Posterior cingulate gyrus (tissue), 11 donors: ENCODE measurements at regions of chr17 and their contacts with region 1.

Region 1: GRCh38 chr17:13002766-13003451 is 14.9 kb downstream of the ELAC2 start:
- DNase-seq: peak; percentile 65 to 97 (median 88)

Region 2: GRCh38 chr17:12180644-12181261 is 822.2 kb before region 1 on chr17:
- intact Hi-C with region 1: loop called (anchors 2 kb)
- DNase-seq: peak in 3 of 10 donors; percentile 9 to 27 (median 15)

Region 3: DNA sequence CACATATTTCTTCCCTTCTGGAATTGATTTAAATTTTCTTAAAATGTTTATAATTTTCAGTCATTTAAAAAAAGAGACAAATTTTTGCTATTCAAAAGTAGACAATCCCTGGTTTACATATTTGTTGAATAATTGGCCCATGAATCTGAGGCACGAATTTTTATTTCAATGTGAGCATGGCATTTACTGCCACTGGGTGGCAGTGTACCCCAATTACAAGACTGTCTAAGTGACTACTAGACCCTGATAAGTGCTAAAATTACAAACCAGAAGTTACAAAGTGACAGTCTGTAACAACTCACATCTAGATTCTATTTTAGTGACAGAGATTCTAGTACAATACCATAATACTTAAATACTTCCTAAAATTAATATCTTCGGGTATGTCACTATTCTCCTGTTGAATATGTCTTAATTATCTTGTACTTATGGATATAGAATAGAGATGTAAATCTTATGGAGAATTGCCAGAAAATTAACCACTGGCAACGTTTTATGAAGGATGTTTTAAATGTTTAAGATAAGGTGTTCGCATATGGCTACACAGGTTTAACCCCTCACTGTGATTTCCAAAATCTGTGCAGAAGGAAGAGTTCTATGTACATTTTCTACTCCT is 746.4 kb before region 1 on chr17:
- intact Hi-C with region 1: loop called (anchors 2 kb)
- DNase-seq: peak in 4 of 10 donors; percentile 15 to 54 (median 35)

Region 4: GRCh38 chr17:12928741-12929140 is 74.2 kb before region 1 on chr17:
- intact Hi-C with region 1: loop called (anchors 5 kb)
- DNase-seq: no peak

Region 5: DNA sequence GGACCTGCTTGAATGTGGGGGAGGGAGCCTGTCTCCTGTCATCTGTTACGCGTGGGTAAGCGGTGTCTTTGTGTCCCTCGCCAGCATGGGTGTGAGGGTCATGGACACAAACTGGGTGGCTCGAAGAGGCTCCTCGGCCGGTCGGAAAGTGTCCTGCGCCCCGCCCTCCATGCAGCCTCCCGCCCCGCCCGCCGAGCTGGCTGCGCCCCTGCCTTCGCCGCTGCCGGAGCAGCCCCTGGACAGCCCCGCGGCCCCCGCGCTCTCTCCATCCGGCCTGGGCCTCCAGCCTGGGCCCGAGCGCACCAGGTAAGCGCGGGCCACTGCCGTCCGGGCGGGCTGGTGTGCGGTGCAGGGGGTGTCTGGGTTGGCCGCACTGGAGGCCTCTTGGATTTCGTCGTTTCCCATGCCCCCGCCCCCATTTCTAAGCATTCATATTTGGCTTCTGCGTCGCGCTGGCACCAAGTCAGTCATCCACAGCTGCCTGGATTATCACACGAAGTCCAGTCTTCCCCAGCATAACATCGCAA is 28.8 kb before region 1 on chr17:
- intact Hi-C with region 1: no loop called
- DNase-seq: peak in 1 of 10 donors; percentile 79